WTC11 (cell line): ENCODE measurements at regions of chr12 and their contacts with region 1.

Region 1: DNA sequence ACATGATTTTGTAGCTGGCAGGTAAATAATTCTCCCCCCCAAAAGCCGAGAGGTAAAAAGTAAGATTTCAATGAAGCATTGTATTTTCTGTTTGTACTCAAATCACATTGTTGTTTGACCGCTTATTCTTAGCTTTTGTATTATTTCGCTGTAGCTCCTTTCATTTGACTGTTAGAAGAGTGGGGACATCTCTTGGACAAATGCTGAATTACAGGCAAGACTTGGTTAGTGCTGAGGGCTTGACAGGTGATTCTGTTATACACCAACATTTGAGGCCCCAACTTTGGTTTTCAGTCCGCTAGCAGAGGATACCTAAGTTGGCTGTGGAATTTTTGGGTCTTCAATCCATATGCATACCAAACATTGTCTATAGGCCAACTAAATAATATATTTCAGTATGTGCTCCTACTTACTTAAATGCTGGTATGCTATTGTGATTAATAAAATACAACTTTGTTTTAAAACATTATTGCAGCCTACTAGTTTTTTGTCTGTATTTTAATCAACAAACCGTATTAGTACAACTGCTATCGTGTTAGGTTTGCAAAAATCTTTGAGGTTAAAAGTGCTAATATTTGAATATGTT is 102.2 kb downstream of the ERC1 start:
- DNase-seq: no peak
- ATAC-seq: peak; percentile 79
- H3K4me3 Mint-ChIP-seq: no peak overlapping the region
- H3K27ac Mint-ChIP-seq: no peak overlapping the region
- H3K4me1 Mint-ChIP-seq: no peaks in the 10 kb centered on the region
- H3K27me3 Mint-ChIP-seq: no peaks in the 10 kb centered on the region
- CTCF ChIP-seq: peak; percentile 39; the same call in 1 of the 2 replicates

Region 2: DNA sequence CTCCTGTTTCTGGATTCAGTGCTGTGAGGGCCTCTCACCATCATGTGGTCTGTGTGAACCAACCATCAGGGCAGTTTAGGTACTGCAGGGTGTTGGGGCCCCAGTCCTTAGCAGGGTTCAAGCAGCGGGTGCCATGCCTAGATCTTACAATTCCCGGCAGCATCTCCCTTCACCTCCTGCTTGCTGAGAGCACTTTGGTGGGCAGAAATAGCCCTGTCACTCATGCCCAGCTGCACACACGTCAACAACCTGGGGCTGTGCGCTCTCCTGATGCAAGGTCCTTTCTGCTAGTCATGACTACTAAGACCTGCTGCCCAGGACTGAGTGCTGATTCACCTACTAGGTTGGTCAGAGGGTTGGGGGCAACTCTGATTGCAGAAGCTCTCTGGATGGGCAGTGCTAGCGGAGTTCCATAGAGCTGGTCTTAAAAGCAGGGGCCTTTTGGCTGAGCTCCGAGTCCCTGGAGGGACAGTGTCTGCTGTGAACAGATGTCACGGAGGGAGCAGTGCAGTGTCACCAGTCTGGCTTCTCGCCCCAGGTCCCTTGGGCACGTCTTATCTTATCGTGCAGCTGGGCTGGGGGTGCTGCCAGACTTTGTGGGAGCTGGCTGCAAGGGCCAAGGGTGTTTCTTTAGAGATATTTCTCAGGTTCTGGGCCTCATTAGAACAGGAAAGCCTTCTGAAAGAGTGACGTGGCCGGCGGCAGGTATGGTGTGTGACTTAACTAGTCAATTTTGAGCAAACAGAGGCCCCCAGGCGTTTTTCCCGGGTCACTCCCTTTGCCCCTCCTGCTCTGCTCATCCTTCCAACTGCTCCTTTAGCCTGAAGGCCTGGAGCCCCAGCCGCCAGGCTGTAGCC is 501.9 kb before region 1 on chr12:
- CTCF ChIA-PET with region 1: no interaction called
- POLR2A ChIA-PET with region 1: no interaction called
- DNase-seq: no peak
- ATAC-seq: peak; percentile 81
- H3K4me3 Mint-ChIP-seq: no peak overlapping the region
- H3K27ac Mint-ChIP-seq: no peak overlapping the region
- H3K4me1 Mint-ChIP-seq: no peaks in the 10 kb centered on the region
- H3K27me3 Mint-ChIP-seq: no peaks in the 10 kb centered on the region
- CTCF ChIP-seq: no peak

Region 3: GRCh38 chr12:949453-950191 is 143.6 kb before region 1 on chr12 and contains the start of gene RAD52:
- CTCF ChIA-PET with region 1: interaction called, 23 read pairs
- POLR2A ChIA-PET with region 1: no interaction called
- DNase-seq: peak; percentile 99
- ATAC-seq: peak; percentile 91
- H3K4me3 Mint-ChIP-seq: peak within 1 kb of the TSS; percentile 97
- H3K27ac Mint-ChIP-seq: peak within 1 kb of the TSS; percentile 99
- H3K4me1 Mint-ChIP-seq: peaks cover 17% of the 10 kb centered on the region
- H3K27me3 Mint-ChIP-seq: no peaks in the 10 kb centered on the region
- CTCF ChIP-seq: peak; percentile 86
- total RNA-seq, gene RAD52: 17.1 to 20.7 TPM (median 19.2 TPM) in 3 replicates

Region 4: DNA sequence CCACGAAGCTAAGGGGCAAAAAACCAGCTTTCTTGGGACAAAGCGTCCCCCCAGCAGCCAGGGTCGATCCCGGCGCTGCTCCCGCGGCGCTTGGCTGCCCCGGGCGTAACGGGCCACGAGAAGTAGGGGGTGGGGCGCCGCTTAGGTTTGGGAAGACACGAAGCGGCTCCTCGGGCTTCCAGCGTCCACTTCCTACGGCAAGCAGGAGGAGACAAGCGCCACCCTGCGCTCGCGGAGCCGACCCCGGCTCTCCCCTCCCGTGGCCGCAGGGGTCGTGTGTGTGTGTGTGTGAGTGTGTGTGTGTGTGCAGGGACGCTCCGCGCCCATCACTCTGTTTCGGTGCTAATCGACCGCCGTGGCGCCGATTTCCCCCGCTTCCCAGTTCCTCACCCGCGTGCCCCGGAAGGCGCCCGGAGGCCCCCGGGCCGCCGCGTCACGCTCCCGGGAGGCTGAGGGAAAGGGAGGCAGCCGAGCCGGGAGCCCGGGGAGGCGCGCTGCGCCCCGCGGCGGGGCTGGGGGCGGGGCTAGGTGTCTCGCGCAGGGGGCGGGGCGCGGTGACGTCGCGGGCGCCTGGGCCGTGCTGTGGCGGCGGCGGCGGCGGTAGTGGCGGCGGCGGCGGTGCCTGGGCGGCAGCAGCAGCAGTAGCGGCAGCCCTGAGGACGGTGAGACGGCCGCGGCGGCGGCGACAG is 102.5 kb before region 1 on chr12 and contains the start of gene ERC1:
- CTCF ChIA-PET with region 1: interaction called, 27 read pairs
- POLR2A ChIA-PET with region 1: no interaction called
- DNase-seq: peak; percentile 79
- ATAC-seq: peak; percentile 73
- H3K4me3 Mint-ChIP-seq: peak within 1 kb of the TSS; percentile 88
- H3K27ac Mint-ChIP-seq: peak within 1 kb of the TSS; percentile 83
- H3K4me1 Mint-ChIP-seq: peaks cover 26% of the 10 kb centered on the region
- H3K27me3 Mint-ChIP-seq: no peaks in the 10 kb centered on the region
- CTCF ChIP-seq: no peak
- total RNA-seq, gene ERC1: 42.2 to 51.8 TPM (median 47.5 TPM) in 3 replicates

Region 5: GRCh38 chr12:1054117-1054870 is 39.0 kb before region 1 on chr12:
- CTCF ChIA-PET with region 1: interaction called, 16 read pairs
- POLR2A ChIA-PET with region 1: no interaction called
- DNase-seq: no peak
- ATAC-seq: peak; percentile 29
- H3K4me3 Mint-ChIP-seq: peak overlapping the region; percentile 26
- H3K27ac Mint-ChIP-seq: peak overlapping the region; percentile 94
- H3K4me1 Mint-ChIP-seq: peaks cover 62% of the 10 kb centered on the region
- H3K27me3 Mint-ChIP-seq: no peaks in the 10 kb centered on the region
- CTCF ChIP-seq: no peak

Region 6: GRCh38 chr12:1104088-1104800 is 11.0 kb after region 1 on chr12:
- CTCF ChIA-PET with region 1: interaction called, 12 read pairs
- POLR2A ChIA-PET with region 1: no interaction called
- DNase-seq: no peak
- ATAC-seq: no peak
- H3K4me3 Mint-ChIP-seq: no peak overlapping the region
- H3K27ac Mint-ChIP-seq: no peak overlapping the region
- H3K4me1 Mint-ChIP-seq: peaks cover 31% of the 10 kb centered on the region
- H3K27me3 Mint-ChIP-seq: no peaks in the 10 kb centered on the region
- CTCF ChIP-seq: no peak

Region 7: DNA sequence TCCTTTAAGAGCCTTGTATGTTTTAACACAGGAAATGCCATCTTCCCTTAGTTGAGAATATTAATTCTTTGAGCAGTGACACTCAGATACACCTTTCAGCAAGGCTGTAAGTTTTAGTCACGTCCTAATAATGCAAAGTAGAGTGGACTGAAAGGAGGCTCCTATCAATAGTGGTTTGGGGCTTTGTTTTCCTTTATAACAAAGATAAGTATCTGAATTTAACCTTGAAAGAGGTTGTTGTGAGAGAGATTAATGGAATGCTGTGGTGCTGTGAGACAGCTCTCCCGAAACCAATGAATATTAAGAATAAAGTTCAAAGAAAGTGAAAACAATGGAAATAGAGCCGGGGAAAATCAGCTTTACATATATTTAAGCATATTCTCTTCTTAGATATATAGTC is 157.4 kb after region 1 on chr12:
- CTCF ChIA-PET with region 1: no interaction called
- POLR2A ChIA-PET with region 1: no interaction called
- DNase-seq: no peak
- ATAC-seq: no peak
- H3K4me3 Mint-ChIP-seq: no peak overlapping the region
- H3K27ac Mint-ChIP-seq: peak overlapping the region; percentile 12; the same call in 1 of the 2 replicates
- H3K4me1 Mint-ChIP-seq: peaks cover 13% of the 10 kb centered on the region
- H3K27me3 Mint-ChIP-seq: no peaks in the 10 kb centered on the region
- CTCF ChIP-seq: no peak